PC-9 (cell line): ENCODE measurements at regions of chr19 and their contacts with region 1.

Region 1: GRCh38 chr19:41866284-41866683 is 6.2 kb downstream of the RPS19 start:
- DNase-seq: peak in 1 of 2 experiments; percentile 51
- H3K4me3 ChIP-seq: no peak overlapping the region
- H3K27ac ChIP-seq: no peak overlapping the region
- H3K4me1 ChIP-seq: peaks cover 65% of the 10 kb centered on the region
- H3K27me3 ChIP-seq: no peaks in the 10 kb centered on the region
- CTCF ChIP-seq: no peak

Region 2: DNA sequence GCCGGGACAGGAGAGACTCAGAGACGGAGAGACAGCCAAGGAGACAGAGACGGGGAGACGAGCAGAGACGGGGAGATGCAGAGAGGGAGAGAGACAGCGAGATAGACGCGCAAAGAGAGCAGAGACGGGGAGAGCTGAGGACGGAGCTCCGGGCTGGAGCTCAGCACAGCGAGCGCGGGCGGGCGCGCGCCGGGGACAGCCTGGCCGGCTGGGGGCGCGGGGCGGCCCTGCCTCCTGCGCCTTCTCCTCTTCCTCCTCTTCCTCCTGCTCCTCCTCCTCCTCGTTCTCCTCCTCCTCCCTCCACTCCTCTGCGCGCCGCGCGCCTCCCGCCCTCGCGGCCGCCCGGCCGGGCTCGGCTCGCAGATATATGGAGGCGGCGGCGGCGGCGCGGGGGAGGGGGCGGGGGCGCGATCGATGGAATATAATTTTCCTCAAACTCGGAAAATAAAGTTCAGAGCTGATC is 62.0 kb after region 1 on chr19 and contains the start of gene ERFL:
- CTCF ChIA-PET with region 1: no interaction called
- POLR2A ChIA-PET with region 1: no interaction called
- intact Hi-C with region 1: no loop called
- DNase-seq: peak in 1 of 2 experiments; percentile 39
- H3K4me3 ChIP-seq: peak within 1 kb of the TSS; percentile 59
- H3K27ac ChIP-seq: no peak within 1 kb of the TSS
- H3K4me1 ChIP-seq: peaks cover 9% of the 10 kb centered on the region; the same call in 1 of the 2 replicates
- H3K27me3 ChIP-seq: peaks cover 74% of the 10 kb centered on the region
- CTCF ChIP-seq: no peak
- total RNA-seq, gene ERFL: 0.65 and 0.98 TPM in 2 replicates

Region 3: GRCh38 chr19:42032431-42032830 is 166.1 kb after region 1 on chr19:
- CTCF ChIA-PET with region 1: interaction called, 14 read pairs
- POLR2A ChIA-PET with region 1: no interaction called
- intact Hi-C with region 1: no loop called
- DNase-seq: peak in 1 of 2 experiments; percentile 39
- H3K4me3 ChIP-seq: no peak overlapping the region
- H3K27ac ChIP-seq: no peak overlapping the region
- H3K4me1 ChIP-seq: no peaks in the 10 kb centered on the region; the same call in 1 of the 2 replicates
- H3K27me3 ChIP-seq: peaks cover 14% of the 10 kb centered on the region; the same call in 1 of the 2 replicates
- CTCF ChIP-seq: no peak